Psoas muscle (tissue), 8 donors: ENCODE measurements at regions of chr22 and their contacts with region 1.

Region 1: DNA sequence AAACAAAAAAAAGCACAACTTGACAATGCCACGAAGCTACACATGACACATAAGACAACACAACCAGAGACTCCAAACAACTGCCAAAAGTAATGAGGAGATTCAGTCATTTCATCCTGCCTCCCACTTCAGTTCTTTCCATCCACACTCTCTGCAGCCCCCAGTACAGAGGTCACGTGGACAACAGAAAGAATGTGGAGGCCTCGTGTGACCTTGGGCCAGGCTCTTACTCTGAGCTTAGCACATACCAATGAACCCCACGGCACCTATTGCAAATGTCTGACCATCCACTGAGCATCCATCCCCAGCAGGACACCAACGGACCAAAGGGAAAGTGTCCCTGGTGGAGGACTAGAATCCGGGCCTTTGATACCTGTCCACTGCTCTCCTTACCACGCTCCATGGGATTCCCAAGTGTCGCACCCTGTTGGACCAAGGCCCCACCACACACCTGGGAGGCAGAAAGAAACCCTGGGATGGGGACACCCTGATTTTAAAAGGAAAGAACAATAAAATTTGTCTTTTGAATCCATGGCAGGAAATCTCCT is 12.5 kb downstream of the CBX7 start:
- DNase-seq: no peak
- ATAC-seq: no peak
- H3K4me3 ChIP-seq: no peak overlapping the region
- H3K27ac ChIP-seq: no peak overlapping the region
- H3K4me1 ChIP-seq: peaks cover 11% of the 10 kb centered on the region
- H3K27me3 ChIP-seq: no peaks in the 10 kb centered on the region
- CTCF ChIP-seq: no peak

Region 2: DNA sequence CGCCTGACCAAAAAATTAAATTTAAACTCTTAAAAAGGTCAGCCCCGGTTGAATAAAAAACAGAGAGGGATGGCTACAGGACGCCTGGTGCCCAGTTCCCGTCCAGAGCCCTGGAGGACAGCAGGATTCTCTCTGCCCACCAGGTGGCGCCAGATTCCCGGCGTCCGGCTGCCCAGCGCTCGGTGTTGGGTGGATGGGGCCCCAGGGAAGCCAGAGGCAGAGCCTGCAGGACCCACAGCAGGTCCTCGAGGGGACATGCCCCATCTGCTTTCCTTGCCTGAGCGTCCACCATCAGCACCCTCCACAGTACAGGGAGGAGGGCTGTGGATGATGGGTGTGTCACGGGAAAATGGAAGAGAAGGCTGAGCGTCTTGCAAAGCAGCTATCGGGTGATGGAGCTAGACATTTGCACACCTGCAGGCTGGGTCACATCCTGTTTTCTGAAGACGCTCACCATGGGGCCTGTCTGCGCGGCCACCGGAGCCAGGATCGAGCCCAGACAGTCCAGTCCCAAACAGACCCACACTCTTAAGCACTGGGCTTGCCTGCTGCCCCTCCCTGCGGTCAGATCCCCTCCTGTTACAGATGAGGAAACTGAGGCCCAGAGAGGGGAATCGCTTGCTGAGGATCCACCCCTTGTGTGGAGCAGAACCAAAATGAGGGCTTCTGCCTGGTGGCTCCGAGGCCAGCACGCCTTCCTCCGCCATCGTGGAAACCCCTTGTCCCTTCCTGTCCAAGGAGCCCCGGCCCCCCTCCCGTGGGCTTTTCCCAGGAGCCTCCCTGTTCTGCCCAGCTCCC is 31.0 kb after region 1 on chr22:
- intact Hi-C with region 1: loop called in 1 of 2 experiments (anchors 1 kb)
- DNase-seq: peak; percentile 87 to 93
- ATAC-seq: peak; percentile 87 to 95 (median 90)
- H3K4me3 ChIP-seq: no peak overlapping the region
- H3K27ac ChIP-seq: no peak overlapping the region
- H3K4me1 ChIP-seq: peaks cover 47% of the 10 kb centered on the region
- H3K27me3 ChIP-seq: no peaks in the 10 kb centered on the region
- CTCF ChIP-seq: peak; percentile 96

Region 3: DNA sequence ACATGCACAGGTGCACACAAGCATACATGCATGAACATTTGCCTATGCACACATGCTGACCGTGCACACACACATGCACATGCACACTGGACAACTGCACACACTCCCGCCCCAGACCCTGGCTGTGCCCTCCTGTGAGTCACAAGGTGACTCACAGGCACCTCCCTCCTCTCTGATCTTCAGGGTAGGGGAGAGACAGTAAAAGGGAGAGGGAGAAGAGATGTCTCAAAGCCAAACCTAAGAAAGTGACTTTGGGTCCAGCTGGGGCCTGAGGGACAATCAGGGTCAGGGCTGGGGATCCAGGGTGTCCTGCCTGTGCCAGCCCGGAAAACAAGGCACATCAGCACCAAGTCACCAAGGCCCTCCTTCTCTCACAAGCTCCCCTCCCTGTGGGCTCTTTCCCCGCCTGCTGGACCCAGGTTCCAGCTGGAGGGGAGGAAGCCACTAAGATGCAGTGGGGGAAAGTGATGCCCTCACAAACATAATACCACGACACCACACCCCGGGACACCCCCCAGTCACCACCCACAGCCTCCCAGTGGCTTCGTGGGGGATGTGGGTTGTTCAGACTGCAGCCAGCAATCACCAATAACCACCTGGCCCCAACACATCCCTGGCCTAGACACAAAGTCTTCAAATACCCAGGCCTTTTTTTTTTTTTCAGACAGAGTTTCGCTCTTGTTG is 65.5 kb after region 1 on chr22:
- intact Hi-C with region 1: no loop called
- DNase-seq: no peak
- ATAC-seq: peak; percentile 56 to 79 (median 67)
- H3K4me3 ChIP-seq: no peak overlapping the region
- H3K27ac ChIP-seq: no peak overlapping the region
- H3K4me1 ChIP-seq: no peaks in the 10 kb centered on the region
- H3K27me3 ChIP-seq: no peaks in the 10 kb centered on the region
- CTCF ChIP-seq: no peak